Right lobe of liver (tissue), 6 donors: ENCODE measurements at regions of chr9 and their contacts with region 1.

Region 1: GRCh38 chr9:90142580-90142979 is 500.0 kb downstream of the DIRAS2 start:
- DNase-seq: peak in 2 of 3 donors; percentile 25 to 51
- ATAC-seq: peak; percentile 40 to 75 (median 64)
- H3K4me3 ChIP-seq: no peak overlapping the region
- H3K27ac ChIP-seq: no peak overlapping the region
- H3K4me1 ChIP-seq: no peaks in the 10 kb centered on the region
- H3K27me3 ChIP-seq: no peaks in the 10 kb centered on the region
- CTCF ChIP-seq: peak; percentile 57 to 65 (median 64)
- POLR2A ChIP-seq: no peak

Region 2: GRCh38 chr9:90219548-90220118 is 77.1 kb after region 1 on chr9:
- intact Hi-C with region 1: loop called in 1 of 2 experiments (anchors 5 kb)
- DNase-seq: peak in 1 of 3 donors; percentile 46
- ATAC-seq: peak; percentile 50 to 85 (median 72)
- H3K4me3 ChIP-seq: no peak overlapping the region
- H3K27ac ChIP-seq: no peak overlapping the region
- H3K4me1 ChIP-seq: no peaks in the 10 kb centered on the region
- H3K27me3 ChIP-seq: peaks cover 0 to 7% of the 10 kb centered on the region in 2 donors
- CTCF ChIP-seq: peak; percentile 40 to 65 (median 48)
- POLR2A ChIP-seq: no peak

Region 3: DNA sequence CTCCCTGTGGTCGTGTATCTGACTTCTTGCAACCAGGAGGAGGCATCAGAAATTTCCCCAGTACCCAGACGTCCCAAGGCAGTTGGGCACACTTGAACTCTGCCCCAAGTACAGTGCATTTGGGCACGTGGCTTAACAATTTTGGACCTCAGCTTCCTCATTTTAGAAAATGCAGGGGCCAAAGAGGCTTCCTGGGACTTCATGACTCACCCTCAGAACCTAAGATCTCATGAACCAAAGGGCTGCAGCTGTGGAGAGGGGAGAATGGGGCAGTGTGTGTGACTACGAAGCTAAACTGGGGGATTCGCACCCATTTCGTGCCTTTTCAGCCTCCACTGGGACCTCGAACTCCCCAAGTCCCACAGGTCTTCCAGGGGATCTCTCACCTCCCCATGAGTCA is 718.2 kb after region 1 on chr9:
- intact Hi-C with region 1: loop called in 1 of 2 experiments (anchors 10 kb)
- DNase-seq: no peak
- ATAC-seq: peak in 3 of 4 donors; percentile 11 to 52 (median 43)
- H3K4me3 ChIP-seq: no peak overlapping the region
- H3K27ac ChIP-seq: no peak overlapping the region
- H3K4me1 ChIP-seq: no peaks in the 10 kb centered on the region
- H3K27me3 ChIP-seq: no peaks in the 10 kb centered on the region
- CTCF ChIP-seq: no peak
- POLR2A ChIP-seq: no peak